PC-9 (cell line): ENCODE measurements at regions of chr6 and their contacts with region 1.

Region 1: GRCh38 chr6:2634139-2634964 is 116.4 kb downstream of the MYLK4 start:
- DNase-seq: peak; percentile 37 to 83
- H3K4me3 ChIP-seq: peak overlapping the region; percentile 33; the same call in 1 of the 2 replicates
- H3K27ac ChIP-seq: no peak overlapping the region
- H3K4me1 ChIP-seq: peaks cover 25% of the 10 kb centered on the region
- H3K27me3 ChIP-seq: no peaks in the 10 kb centered on the region
- CTCF ChIP-seq: peak; percentile 90

Region 2: DNA sequence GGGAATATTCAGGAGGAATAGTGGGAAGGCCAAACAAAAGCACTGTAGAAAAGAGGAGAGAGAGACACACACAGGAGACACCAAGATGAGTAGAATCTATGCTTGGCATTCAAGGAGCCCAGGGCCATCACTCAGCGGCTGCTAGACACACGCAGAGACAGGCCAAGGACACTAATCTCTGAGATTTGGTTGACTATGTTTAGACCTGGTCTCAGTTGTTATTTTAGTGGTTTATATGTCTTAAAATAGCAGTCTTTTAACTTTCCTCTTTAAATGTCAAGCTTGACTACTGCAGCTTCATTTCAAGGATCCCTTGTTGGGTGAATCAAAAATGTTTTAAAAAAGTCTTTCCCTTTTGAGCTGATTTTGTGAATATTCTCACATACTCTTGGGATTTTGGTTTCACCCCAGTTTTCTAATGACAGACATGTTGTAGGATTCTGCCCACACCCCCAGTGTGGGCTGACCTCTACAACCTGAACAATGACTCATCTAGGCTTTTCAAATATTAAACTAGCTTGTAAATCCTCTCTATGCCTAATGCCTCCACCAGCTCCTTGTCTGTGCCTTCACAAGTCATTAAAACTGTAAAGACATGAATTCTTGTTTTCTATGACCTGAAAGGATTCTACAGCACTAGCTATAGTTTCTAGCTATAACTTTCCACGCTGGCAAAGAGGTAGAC is 1798.7 kb before region 1 on chr6:
- CTCF ChIA-PET with region 1: no interaction called
- POLR2A ChIA-PET with region 1: no interaction called
- intact Hi-C with region 1: no loop called
- DNase-seq: no peak
- H3K4me3 ChIP-seq: no peak overlapping the region
- H3K27ac ChIP-seq: peak overlapping the region; percentile 45
- H3K4me1 ChIP-seq: peaks cover 24% of the 10 kb centered on the region
- H3K27me3 ChIP-seq: no peaks in the 10 kb centered on the region
- CTCF ChIP-seq: no peak

Region 3: GRCh38 chr6:1596088-1596852 is 1038.1 kb before region 1 on chr6:
- CTCF ChIA-PET with region 1: interaction called, 3 read pairs
- POLR2A ChIA-PET with region 1: no interaction called
- intact Hi-C with region 1: loop called (anchors 2 kb)
- DNase-seq: peak; percentile 43 to 61
- H3K4me3 ChIP-seq: no peak overlapping the region
- H3K27ac ChIP-seq: no peak overlapping the region
- H3K4me1 ChIP-seq: no peaks in the 10 kb centered on the region
- H3K27me3 ChIP-seq: no peaks in the 10 kb centered on the region
- CTCF ChIP-seq: peak; percentile 88

Region 4: GRCh38 chr6:2179959-2180358 is 454.4 kb before region 1 on chr6:
- CTCF ChIA-PET with region 1: no interaction called
- POLR2A ChIA-PET with region 1: interaction called, 10 read pairs
- intact Hi-C with region 1: no loop called
- DNase-seq: no peak
- H3K4me3 ChIP-seq: no peak overlapping the region
- H3K27ac ChIP-seq: no peak overlapping the region
- H3K4me1 ChIP-seq: no peaks in the 10 kb centered on the region
- H3K27me3 ChIP-seq: no peaks in the 10 kb centered on the region
- CTCF ChIP-seq: no peak

Region 5: DNA sequence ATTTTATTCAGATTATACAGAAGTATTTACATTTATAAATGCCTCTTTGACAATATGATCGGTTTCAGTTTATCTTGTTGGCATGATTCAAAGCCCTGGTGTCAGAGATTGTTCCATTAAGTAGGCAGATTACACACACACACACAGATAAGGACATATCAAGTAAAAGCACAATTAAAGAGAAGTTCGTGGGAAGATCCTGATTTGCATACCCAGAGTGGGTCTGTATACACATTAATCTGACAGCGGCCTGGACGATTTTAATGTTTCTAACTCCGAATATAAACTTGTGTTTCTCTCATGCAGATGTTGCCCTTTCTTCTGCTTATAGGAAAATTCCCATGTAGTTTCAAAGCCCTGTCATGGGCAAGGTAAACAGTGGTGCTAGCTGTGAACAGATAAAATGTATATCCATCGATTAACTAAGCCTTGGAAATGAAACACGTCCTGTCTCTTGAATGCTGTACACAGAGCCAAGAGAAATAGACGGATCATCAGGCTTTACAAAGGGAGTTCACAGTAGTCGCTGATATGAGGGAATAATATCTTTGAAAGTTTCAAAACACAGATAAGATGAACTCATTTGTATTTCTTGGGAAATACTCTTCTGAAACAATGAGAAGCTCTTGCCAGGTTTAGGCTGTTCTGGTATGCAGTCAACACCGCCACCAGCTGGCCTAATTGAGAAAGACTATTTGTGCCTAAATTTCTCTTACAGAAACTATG is 280.8 kb before region 1 on chr6:
- CTCF ChIA-PET with region 1: no interaction called
- POLR2A ChIA-PET with region 1: no interaction called
- intact Hi-C with region 1: loop called (anchors 1 kb)
- DNase-seq: peak; percentile 60 to 62
- H3K4me3 ChIP-seq: no peak overlapping the region
- H3K27ac ChIP-seq: no peak overlapping the region
- H3K4me1 ChIP-seq: peaks cover 6% of the 10 kb centered on the region; the same call in 1 of the 2 replicates
- H3K27me3 ChIP-seq: no peaks in the 10 kb centered on the region
- CTCF ChIP-seq: peak; percentile 79

Region 6: GRCh38 chr6:2412731-2413130 is 221.6 kb before region 1 on chr6:
- CTCF ChIA-PET with region 1: no interaction called
- POLR2A ChIA-PET with region 1: no interaction called
- intact Hi-C with region 1: no loop called
- DNase-seq: no peak
- H3K4me3 ChIP-seq: no peak overlapping the region
- H3K27ac ChIP-seq: no peak overlapping the region
- H3K4me1 ChIP-seq: no peaks in the 10 kb centered on the region
- H3K27me3 ChIP-seq: no peaks in the 10 kb centered on the region
- CTCF ChIP-seq: no peak

Region 7: GRCh38 chr6:2448820-2449571 is 185.4 kb before region 1 on chr6:
- CTCF ChIA-PET with region 1: no interaction called
- POLR2A ChIA-PET with region 1: no interaction called
- intact Hi-C with region 1: loop called (anchors 1 kb)
- DNase-seq: peak; percentile 28 to 59
- H3K4me3 ChIP-seq: no peak overlapping the region
- H3K27ac ChIP-seq: no peak overlapping the region
- H3K4me1 ChIP-seq: no peaks in the 10 kb centered on the region
- H3K27me3 ChIP-seq: no peaks in the 10 kb centered on the region
- CTCF ChIP-seq: peak; percentile 78

Region 8: DNA sequence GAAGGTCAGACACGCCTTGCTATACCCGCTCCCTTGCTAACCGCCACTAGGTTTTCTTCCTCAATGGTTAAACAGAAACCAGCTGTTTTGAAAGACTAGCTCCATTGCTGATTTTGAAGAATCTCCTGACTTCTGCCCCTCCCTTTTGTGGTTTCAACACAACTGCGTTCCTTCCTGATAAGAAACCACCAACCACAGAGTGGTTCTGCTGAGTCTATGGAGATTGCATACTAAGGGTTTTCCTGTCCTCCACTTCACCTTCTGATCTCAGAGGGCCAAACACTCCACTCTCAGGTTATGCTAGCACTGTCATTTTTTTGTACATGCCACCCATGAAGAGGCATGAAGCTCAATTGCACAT is 91.5 kb before region 1 on chr6:
- CTCF ChIA-PET with region 1: no interaction called
- POLR2A ChIA-PET with region 1: no interaction called
- intact Hi-C with region 1: loop called (anchors 2 kb)
- DNase-seq: peak; percentile 53 to 86
- H3K4me3 ChIP-seq: no peak overlapping the region
- H3K27ac ChIP-seq: peak overlapping the region; percentile 71
- H3K4me1 ChIP-seq: peaks cover 33% of the 10 kb centered on the region
- H3K27me3 ChIP-seq: no peaks in the 10 kb centered on the region
- CTCF ChIP-seq: no peak